ENCODE measurements at regions of chr19 and their contacts with region 1.

Region 1: GRCh38 chr19:39212375-39212742 is 8.3 kb upstream of the SYCN start:
- H3K4me3 ChIP-seq: no peak overlapping the region
- H3K27ac ChIP-seq: no peak overlapping the region
- H3K4me1 ChIP-seq: no peaks in the 10 kb centered on the region
- CTCF ChIP-seq: peak; percentile 76

Region 2: DNA sequence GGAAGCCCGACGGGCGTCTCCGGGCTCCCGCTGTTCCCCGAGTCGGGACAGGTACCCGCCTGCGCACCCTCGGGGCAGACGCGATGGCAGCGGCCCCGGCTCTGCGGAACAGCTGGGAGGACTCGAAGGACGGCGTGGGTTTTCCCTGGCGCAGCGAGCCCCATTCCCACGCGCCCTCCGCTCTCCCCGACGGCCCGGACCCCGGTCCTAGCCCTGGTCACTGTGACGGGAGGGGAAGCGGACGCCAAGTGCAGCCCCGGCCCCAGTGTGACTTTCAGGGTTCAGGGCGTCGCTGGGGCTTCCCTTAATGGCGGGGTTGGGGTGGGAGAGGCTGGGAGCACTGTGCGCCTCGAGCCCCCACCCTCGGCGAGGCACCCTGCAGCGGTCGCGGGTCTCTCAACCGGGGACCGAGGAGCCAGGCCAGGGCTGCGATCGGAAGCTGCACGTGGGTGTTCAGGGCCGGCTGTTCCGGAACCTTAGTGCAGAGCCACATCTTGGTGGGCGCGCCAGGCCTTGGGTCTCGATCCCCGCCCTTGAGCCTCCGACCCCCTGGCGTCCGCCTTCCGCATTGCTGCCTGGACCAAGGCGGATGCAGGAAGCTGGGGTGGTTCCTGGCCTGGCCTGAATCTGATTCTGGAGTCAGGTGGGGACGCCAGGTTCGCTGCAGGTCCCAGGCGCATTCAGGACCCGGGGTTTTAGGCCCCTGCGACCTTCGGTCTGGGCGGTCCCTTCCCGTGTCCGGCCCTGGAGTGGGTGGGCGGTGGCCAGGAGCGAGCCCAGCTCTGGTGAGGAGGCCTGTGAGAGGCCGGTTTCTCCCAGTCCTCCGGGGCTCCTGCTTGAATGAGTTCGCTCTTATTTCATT is 419.9 kb before region 1 on chr19:
- CTCF ChIA-PET with region 1: no interaction called
- POLR2A ChIA-PET with region 1: no interaction called
- H3K4me3 ChIP-seq: no peak overlapping the region
- H3K27ac ChIP-seq: peak overlapping the region; percentile 9; the same call in 1 of the 2 replicates
- H3K4me1 ChIP-seq: no peaks in the 10 kb centered on the region
- CTCF ChIP-seq: no peak

Region 3: DNA sequence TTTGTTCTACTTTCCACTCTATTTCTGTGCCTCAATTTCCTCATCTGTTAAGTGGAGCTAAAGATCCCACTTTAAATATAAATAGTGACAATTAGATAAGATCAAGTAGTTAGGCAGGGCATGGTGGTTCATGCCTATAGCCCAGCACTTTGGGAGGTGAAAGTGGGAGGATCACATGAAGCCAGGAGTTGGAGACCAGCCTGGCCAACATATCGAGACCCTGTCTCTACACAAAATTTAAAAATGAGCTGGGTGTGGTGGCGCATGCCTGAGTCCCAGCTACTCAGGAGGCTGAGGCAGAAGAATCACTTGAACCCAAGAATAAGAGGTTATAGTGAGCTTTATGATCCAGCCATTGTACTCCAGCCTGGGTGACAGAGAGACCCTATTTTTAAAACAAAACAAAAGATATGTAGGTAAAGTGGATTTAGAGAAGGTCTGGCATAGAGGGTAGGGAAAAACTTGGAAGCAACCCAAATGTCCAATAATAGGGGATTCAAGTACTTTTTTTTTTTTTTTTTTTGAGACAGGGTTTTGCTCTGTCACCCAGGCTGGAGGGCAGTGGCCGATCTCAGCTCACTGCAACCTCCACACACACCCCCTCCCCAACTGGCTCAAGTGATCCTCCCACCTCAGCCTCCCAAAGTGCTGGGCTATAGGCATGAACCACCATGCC is 92.7 kb before region 1 on chr19:
- CTCF ChIA-PET with region 1: interaction called, 19 read pairs
- POLR2A ChIA-PET with region 1: no interaction called
- H3K4me3 ChIP-seq: no peak overlapping the region
- H3K27ac ChIP-seq: no peak overlapping the region
- H3K4me1 ChIP-seq: no peaks in the 10 kb centered on the region
- CTCF ChIP-seq: no peak

Region 4: DNA sequence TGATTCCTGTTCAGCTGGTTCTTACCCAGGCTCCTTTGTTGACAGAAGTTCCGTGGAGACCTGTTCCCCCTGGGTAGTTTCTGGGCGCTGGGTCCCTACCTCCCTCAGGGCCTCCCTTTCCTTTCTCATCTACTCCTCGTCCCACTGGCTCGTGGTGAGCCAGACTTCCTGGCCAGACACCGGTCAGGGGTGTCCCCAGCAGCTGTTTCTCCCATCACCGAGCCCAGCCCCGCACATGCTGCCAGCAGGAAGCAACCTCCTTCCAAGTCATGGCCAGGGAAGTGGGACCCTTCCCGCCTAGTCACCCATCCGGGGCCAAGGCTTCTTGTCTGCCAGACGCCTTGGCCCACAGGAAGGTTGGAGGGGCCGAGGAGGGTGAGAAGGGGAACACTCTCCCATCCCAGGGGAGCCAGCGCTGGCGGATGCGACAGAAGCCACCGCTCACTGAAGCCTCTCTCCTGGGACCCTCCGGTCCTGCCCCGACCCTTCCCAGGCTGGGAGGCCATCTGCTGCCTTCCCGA is 81.1 kb before region 1 on chr19:
- CTCF ChIA-PET with region 1: no interaction called
- POLR2A ChIA-PET with region 1: no interaction called
- H3K4me3 ChIP-seq: no peak overlapping the region
- H3K27ac ChIP-seq: peak overlapping the region; percentile 31; the same call in 1 of the 2 replicates
- H3K4me1 ChIP-seq: peaks cover 47% of the 10 kb centered on the region
- CTCF ChIP-seq: no peak

Region 5: GRCh38 chr19:39173250-39173940 is 39.0 kb before region 1 on chr19:
- CTCF ChIA-PET with region 1: no interaction called
- POLR2A ChIA-PET with region 1: no interaction called
- H3K4me3 ChIP-seq: no peak overlapping the region
- H3K27ac ChIP-seq: no peak overlapping the region
- H3K4me1 ChIP-seq: no peaks in the 10 kb centered on the region
- CTCF ChIP-seq: no peak

Region 6: GRCh38 chr19:39187559-39187957 is 24.8 kb before region 1 on chr19:
- CTCF ChIA-PET with region 1: interaction called, 24 read pairs
- POLR2A ChIA-PET with region 1: no interaction called
- H3K4me3 ChIP-seq: no peak overlapping the region
- H3K27ac ChIP-seq: 0 out of 2 replicates have a peak overlapping the region, but pooled peaks have one; percentile 24
- H3K4me1 ChIP-seq: 0 out of 2 replicates have a peak, but pooled peaks cover 4% of the 10 kb centered on the region
- CTCF ChIP-seq: no peak

Region 7: DNA sequence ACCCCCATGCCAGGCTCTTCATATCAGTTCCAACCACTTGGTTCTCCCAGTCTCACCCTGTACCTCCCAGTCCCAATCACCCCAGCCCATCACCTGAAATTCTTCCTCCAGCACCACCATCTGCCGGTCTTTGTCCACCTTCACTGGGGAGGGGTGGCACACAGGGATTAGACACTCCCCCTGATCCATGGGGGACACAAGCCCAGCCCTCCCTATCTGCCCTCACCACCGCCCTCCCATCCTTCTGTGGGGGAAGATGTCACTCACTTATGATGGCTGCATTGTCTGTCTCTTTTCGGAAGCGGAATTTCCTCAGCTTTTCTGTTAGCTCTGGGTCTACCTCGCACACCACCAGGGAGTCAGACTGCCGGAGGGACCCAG is 122.8 kb after region 1 on chr19:
- CTCF ChIA-PET with region 1: interaction called, 31 read pairs
- POLR2A ChIA-PET with region 1: interaction called, 4 read pairs
- H3K4me3 ChIP-seq: no peak overlapping the region
- H3K27ac ChIP-seq: no peak overlapping the region
- H3K4me1 ChIP-seq: no peaks in the 10 kb centered on the region
- CTCF ChIP-seq: no peak

Measured in HEK293 (cell line).